Transverse colon (tissue), 4 donors: ENCODE measurements at regions of chr4 and their contacts with region 1.

Region 1: GRCh38 chr4:3936184-3936583 is 170.0 kb downstream of the ADRA2C start:
- DNase-seq: no peak
- H3K4me3 ChIP-seq: no peak overlapping the region
- H3K27ac ChIP-seq: no peak overlapping the region
- H3K4me1 ChIP-seq: no peaks in the 10 kb centered on the region
- H3K27me3 ChIP-seq: no peaks in the 10 kb centered on the region
- CTCF ChIP-seq: no peak
- EP300 ChIP-seq: no peak
- POLR2A ChIP-seq: no peak

Region 2: GRCh38 chr4:3013839-3014350 is 922.3 kb before region 1 on chr4:
- in situ Hi-C with region 1: no loop called
- intact Hi-C with region 1: loop called (anchors 10 kb)
- DNase-seq: no peak
- H3K4me3 ChIP-seq: no peak overlapping the region
- H3K27ac ChIP-seq: no peak overlapping the region
- H3K4me1 ChIP-seq: no peaks in the 10 kb centered on the region
- H3K27me3 ChIP-seq: no peaks in the 10 kb centered on the region
- CTCF ChIP-seq: no peak
- EP300 ChIP-seq: no peak
- POLR2A ChIP-seq: no peak